Activated CD8-positive, alpha-beta T cell treated with anti-CD3 and anti-CD28 coated beads, Interleukin-2, amount 10 ng/mL, durations not matched to agents 7 days and 5 days (primary cell): ENCODE measurements at regions of chr15 and their contacts with region 1.

Region 1: GRCh38 chr15:82129761-82130160 is 83.9 kb upstream of the MEX3B start:
- DNase-seq: no peak
- ATAC-seq: no peak
- H3K4me3 Mint-ChIP-seq: no peak overlapping the region
- H3K27ac Mint-ChIP-seq: no peak overlapping the region
- H3K4me1 Mint-ChIP-seq: peaks cover 13% of the 10 kb centered on the region
- H3K27me3 Mint-ChIP-seq: no peaks in the 10 kb centered on the region

Region 2: GRCh38 chr15:81957700-81958099 is 172.1 kb before region 1 on chr15:
- CTCF ChIA-PET with region 1: no interaction called
- POLR2A ChIA-PET with region 1: no interaction called
- DNase-seq: no peak
- ATAC-seq: no peak
- H3K4me3 Mint-ChIP-seq: no peak overlapping the region
- H3K27ac Mint-ChIP-seq: no peak overlapping the region
- H3K4me1 Mint-ChIP-seq: no peaks in the 10 kb centered on the region
- H3K27me3 Mint-ChIP-seq: no peaks in the 10 kb centered on the region

Region 3: DNA sequence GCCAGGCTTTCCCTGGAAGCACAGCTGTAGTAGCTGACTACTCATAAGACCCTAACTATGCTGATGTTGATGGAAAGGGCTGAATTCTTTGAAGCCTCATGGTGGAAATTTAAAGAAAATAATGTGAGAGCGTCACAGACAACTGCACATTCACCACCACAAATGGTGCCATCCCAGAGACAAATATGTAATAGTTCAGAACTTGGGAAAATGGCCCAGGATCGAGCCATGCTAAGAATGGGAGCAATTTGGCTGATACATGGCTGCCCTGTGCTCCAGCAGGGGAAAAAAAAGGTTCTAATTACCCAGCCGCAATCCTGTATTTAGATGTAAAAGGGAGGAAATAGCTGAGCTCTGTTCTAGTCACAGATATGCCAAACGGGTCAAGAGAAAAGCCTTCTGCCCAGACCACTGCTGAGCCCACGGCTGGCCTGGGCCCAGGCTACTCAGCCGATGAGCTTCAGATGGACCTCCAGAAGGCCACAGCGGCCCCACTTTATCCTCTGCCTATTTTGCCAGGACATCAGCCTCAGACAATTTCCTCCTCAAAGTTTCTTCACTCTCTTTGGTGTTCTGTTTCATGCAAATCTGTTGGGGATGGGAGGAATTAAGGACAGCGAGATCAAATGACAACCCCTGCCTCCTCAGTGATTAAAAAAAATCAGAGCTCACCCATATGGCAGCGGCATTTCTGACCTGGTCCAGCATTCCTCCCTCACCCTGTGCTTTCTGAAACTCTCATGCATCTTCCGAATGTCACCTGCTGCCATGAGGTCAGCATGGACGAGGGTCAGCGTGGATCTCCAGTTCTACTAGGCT is 29.4 kb before region 1 on chr15:
- CTCF ChIA-PET with region 1: no interaction called
- POLR2A ChIA-PET with region 1: no interaction called
- DNase-seq: no peak
- ATAC-seq: no peak
- H3K4me3 Mint-ChIP-seq: no peak overlapping the region
- H3K27ac Mint-ChIP-seq: no peak overlapping the region
- H3K4me1 Mint-ChIP-seq: no peaks in the 10 kb centered on the region
- H3K27me3 Mint-ChIP-seq: no peaks in the 10 kb centered on the region

Region 4: GRCh38 chr15:82139823-82140268 is 10.1 kb after region 1 on chr15:
- CTCF ChIA-PET with region 1: interaction called, 13 read pairs
- POLR2A ChIA-PET with region 1: interaction called, 3 read pairs
- DNase-seq: no peak
- ATAC-seq: no peak
- H3K4me3 Mint-ChIP-seq: no peak overlapping the region
- H3K27ac Mint-ChIP-seq: peak overlapping the region; percentile 28
- H3K4me1 Mint-ChIP-seq: peaks cover 2% of the 10 kb centered on the region
- H3K27me3 Mint-ChIP-seq: no peaks in the 10 kb centered on the region